ENCODE measurements at regions of chr22 and their contacts with region 1.

Region 1: DNA sequence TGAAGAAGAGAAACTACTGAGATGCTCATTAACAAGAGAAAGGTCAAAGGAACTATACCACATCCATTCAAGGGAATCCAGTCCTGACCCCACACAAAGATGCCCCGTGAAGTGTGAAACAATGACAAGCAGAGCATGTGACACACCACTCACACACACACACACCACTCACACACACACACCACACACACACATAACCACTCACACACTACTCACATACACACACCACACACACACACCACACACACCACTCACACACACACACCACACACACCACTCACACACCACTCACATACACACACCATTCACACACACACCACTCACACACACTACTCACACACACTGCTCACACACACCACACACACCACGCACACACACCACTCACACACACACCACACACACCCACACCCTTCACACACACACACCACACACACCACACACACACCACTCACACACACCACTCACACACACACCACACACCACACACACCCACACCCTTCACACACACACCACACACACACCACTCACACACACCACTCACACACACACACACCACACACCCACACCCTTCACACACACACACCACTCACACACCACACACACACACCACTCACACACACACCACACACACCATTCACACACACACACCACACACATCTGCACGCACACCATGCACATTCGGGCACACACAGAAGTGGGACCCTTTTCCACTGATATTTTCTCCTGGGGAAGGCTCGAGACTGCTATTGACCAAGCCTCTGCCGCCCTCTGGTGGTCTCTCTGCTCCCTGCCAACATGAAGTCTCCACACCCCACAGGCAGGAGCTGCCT is 32.0 kb upstream of the COMT start:
- DNase-seq: peak; percentile 91
- ATAC-seq: peak; percentile 89

Region 2: GRCh38 chr22:19730655-19731360 is 178.8 kb before region 1 on chr22:
- intact Hi-C with region 1: loop called (anchors 1 kb)
- DNase-seq: peak; percentile 91
- ATAC-seq: peak; percentile 90

Region 3: DNA sequence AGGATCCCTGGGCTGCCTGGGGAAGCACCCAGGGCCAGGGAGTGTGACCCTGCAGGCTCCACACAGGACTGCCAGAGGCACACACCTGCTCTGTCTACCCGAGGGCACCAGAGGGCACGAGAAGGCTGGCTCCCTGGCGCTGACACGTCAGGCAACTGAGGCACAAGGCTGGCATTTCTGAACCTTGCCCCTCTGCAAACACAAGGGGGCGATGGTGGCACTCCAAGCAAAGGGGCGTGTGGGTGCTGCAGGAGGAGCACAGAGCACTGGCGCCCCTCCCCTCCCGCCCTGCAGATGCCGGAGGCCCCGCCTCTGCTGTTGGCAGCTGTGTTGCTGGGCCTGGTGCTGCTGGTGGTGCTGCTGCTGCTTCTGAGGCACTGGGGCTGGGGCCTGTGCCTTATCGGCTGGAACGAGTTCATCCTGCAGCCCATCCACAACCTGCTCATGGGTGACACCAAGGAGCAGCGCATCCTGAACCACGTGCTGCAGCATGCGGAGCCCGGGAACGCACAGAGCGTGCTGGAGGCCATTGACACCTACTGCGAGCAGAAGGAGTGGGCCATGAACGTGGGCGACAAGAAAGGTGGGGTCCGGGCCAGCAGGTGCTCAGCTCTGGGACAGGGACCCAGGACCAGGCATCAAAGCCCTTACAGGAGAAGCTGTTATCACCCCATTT is 52.8 kb after region 1 on chr22:
- intact Hi-C with region 1: no loop called
- DNase-seq: peak; percentile 77
- ATAC-seq: no peak

Measured in Right ventricle myocardium inferior (tissue), 1 donor.